Natural killer cell (primary cell): ENCODE measurements at regions of chr11 and their contacts with region 1.

Region 1: DNA sequence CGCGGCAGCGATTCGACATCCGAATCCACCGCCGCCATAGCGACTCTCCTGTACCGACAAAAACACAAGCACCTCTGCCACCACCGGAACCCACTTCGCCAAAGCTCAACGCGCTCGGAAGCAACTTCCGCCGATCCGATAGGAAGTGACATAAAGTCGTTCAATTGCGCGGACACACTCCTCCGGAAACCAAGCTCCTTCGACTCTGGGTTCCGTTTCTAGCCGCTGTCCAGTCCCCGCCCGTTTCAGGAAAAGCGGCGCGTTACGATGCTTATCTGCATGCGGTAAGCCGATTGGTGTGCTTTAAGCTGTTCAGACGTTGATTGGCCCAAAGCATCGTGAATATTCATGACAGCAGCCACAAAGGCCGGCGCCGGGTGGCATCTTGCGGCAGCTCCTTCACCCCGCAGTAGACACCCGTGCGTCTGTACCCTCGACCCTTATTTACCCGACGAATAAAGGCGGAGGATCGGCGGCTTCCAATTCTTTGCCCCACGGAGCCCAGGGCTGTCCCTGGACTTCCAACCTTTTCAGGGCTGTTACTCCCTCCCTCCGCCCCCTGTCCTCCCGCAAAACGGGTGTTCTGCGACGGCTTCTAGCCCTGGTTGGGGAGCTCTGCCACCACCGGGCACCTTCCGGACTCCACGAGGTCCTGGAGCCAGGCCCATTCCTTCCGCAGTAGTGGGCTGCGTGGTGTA is at the start of gene TUT1:
- DNase-seq: peak; percentile 91 to 99
- ATAC-seq: peak; percentile 84 to 95 (median 87)
- H3K4me3 ChIP-seq: peak within 1 kb of the TSS; percentile 58
- H3K4me3 Mint-ChIP-seq: peak within 1 kb of the TSS; percentile 98
- H3K27ac ChIP-seq: peak within 1 kb of the TSS; percentile 90
- H3K27ac Mint-ChIP-seq: peak within 1 kb of the TSS; percentile 94 to 97
- H3K4me1 ChIP-seq: peaks cover 32% of the 10 kb centered on the region
- H3K4me1 Mint-ChIP-seq: peaks cover 32 to 40% of the 10 kb centered on the region in 2 donors
- H3K27me3 ChIP-seq: no peaks in the 10 kb centered on the region
- H3K27me3 Mint-ChIP-seq: no peaks in the 10 kb centered on the region
- CTCF ChIP-seq: no peak
- total RNA-seq, gene TUT1: 20.0 to 28.9 (median 26.2) TPM

Region 2: GRCh38 chr11:62556108-62556871 is 35.3 kb before region 1 on chr11:
- intact Hi-C with region 1: loop called (anchors 2 kb)
- DNase-seq: peak; percentile 81 to 93
- ATAC-seq: peak; percentile 53 to 79 (median 69)
- H3K4me3 ChIP-seq: peak overlapping the region; percentile 12
- H3K4me3 Mint-ChIP-seq: peak overlapping the region; percentile 93
- H3K27ac ChIP-seq: peak overlapping the region; percentile 97
- H3K27ac Mint-ChIP-seq: peak overlapping the region; percentile 97 to 98
- H3K4me1 ChIP-seq: peaks cover 92% of the 10 kb centered on the region
- H3K4me1 Mint-ChIP-seq: peaks cover 85 to 96% of the 10 kb centered on the region in 2 donors
- H3K27me3 ChIP-seq: no peaks in the 10 kb centered on the region
- H3K27me3 Mint-ChIP-seq: no peaks in the 10 kb centered on the region
- CTCF ChIP-seq: no peak

Region 3: DNA sequence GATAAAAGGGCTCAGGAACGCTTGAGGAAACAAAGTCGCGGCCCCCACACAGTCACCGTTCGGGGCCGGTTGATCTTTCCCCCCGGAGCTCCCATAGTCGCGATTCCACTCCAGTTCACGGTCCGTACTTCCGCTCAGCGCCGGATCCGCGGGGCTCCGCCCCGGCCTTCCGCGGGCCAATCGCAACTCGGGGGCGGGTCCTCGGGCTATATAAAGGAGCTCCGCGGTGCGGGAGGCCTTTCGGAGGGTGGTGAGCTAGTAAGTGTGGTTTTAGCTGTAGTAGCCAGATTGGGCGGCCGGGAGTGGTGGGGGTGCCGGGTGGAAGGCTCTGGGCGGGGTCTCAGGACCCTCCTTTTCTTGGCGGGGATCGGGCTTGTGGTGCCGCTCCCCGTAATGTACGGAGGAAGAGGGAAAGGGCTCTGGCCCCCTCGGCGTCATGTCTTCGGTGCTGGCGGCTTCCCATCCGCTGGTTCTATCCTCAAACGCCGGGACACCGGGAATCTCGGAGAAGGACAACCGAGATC is 73.5 kb after region 1 on chr11 and contains the starts of genes C11orf98 and CSKMT:
- intact Hi-C with region 1: loop called (anchors 2 kb)
- DNase-seq: peak; percentile 96
- ATAC-seq: peak; percentile 92 to 97 (median 95)
- H3K4me3 ChIP-seq: peak within 1 kb of the TSS; percentile 87
- H3K4me3 Mint-ChIP-seq: peak within 1 kb of the TSS; percentile 96
- H3K27ac ChIP-seq: peak within 1 kb of the TSS; percentile 80
- H3K27ac Mint-ChIP-seq: peak within 1 kb of the TSS; percentile 87 to 95
- H3K4me1 ChIP-seq: peaks cover 28% of the 10 kb centered on the region
- H3K4me1 Mint-ChIP-seq: peaks cover 6 to 29% of the 10 kb centered on the region in 2 donors
- H3K27me3 ChIP-seq: no peaks in the 10 kb centered on the region
- H3K27me3 Mint-ChIP-seq: no peaks in the 10 kb centered on the region
- CTCF ChIP-seq: no peak
- total RNA-seq, gene C11orf98: 36.5 to 57.9 (median 39.1) TPM
- total RNA-seq, gene CSKMT: 12.0 to 21.5 (median 13.7) TPM

Region 4: GRCh38 chr11:62694455-62695167 is 103.0 kb after region 1 on chr11:
- intact Hi-C with region 1: loop called (anchors 1 kb)
- DNase-seq: peak; percentile 72 to 91
- ATAC-seq: peak; percentile 78 to 98 (median 96)
- H3K4me3 ChIP-seq: no peak overlapping the region
- H3K4me3 Mint-ChIP-seq: no peak overlapping the region
- H3K27ac ChIP-seq: no peak overlapping the region
- H3K27ac Mint-ChIP-seq: peak overlapping the region in 1 of 2 donors; percentile 7
- H3K4me1 ChIP-seq: no peaks in the 10 kb centered on the region
- H3K4me1 Mint-ChIP-seq: peaks cover 8% of the 10 kb centered on the region in 2 donors
- H3K27me3 ChIP-seq: no peaks in the 10 kb centered on the region
- H3K27me3 Mint-ChIP-seq: no peaks in the 10 kb centered on the region
- CTCF ChIP-seq: peak; percentile 84

Region 5: DNA sequence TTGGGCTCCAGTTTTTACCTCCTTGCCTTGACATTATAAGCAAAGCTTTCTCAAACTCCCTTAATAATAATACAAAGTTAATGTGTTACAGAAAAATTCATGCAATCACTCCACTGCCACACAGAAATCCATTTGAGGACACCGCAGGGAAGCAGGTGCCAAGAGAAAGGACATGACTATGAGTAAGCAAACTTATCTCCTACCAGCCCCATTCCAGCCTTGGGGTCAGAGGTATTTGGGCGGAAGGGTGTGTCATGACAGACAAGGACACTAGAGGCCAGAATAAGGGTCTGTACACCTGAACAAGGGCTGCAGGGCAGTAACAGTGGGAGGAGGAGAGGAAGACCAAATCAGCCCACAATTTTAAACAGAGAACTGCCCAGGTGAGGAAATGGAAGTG is 121.7 kb after region 1 on chr11:
- intact Hi-C with region 1: no loop called
- DNase-seq: no peak
- ATAC-seq: no peak
- H3K4me3 ChIP-seq: no peak overlapping the region
- H3K4me3 Mint-ChIP-seq: no peak overlapping the region
- H3K27ac ChIP-seq: no peak overlapping the region
- H3K27ac Mint-ChIP-seq: peak overlapping the region; percentile 66 to 72
- H3K4me1 ChIP-seq: peaks cover 19% of the 10 kb centered on the region
- H3K4me1 Mint-ChIP-seq: peaks cover 21 to 38% of the 10 kb centered on the region in 2 donors
- H3K27me3 ChIP-seq: no peaks in the 10 kb centered on the region
- H3K27me3 Mint-ChIP-seq: no peaks in the 10 kb centered on the region
- CTCF ChIP-seq: no peak

Region 6: GRCh38 chr11:62841361-62842184 is 250.0 kb after region 1 on chr11:
- intact Hi-C with region 1: loop called (anchors 2 kb)
- DNase-seq: peak; percentile 75 to 94
- ATAC-seq: peak; percentile 46 to 74 (median 65)
- H3K4me3 ChIP-seq: peak overlapping the region; percentile 82
- H3K4me3 Mint-ChIP-seq: no peak overlapping the region
- H3K27ac ChIP-seq: peak overlapping the region; percentile 92
- H3K27ac Mint-ChIP-seq: no peak overlapping the region
- H3K4me1 ChIP-seq: peaks cover 35% of the 10 kb centered on the region
- H3K4me1 Mint-ChIP-seq: peaks cover 17 to 19% of the 10 kb centered on the region in 2 donors
- H3K27me3 ChIP-seq: no peaks in the 10 kb centered on the region
- H3K27me3 Mint-ChIP-seq: no peaks in the 10 kb centered on the region
- CTCF ChIP-seq: no peak

Region 7: GRCh38 chr11:62880803-62881578 is 289.4 kb after region 1 on chr11 and contains the start of gene SLC3A2:
- intact Hi-C with region 1: loop called (anchors 5 kb)
- DNase-seq: peak; percentile 88 to 94
- ATAC-seq: peak; percentile 72 to 89 (median 80)
- H3K4me3 ChIP-seq: peak within 1 kb of the TSS; percentile 100
- H3K4me3 Mint-ChIP-seq: peak within 1 kb of the TSS; percentile 100
- H3K27ac ChIP-seq: peak within 1 kb of the TSS; percentile 90
- H3K27ac Mint-ChIP-seq: peak within 1 kb of the TSS; percentile 99
- H3K4me1 ChIP-seq: peaks cover 36% of the 10 kb centered on the region
- H3K4me1 Mint-ChIP-seq: peaks cover 41 to 56% of the 10 kb centered on the region in 2 donors
- H3K27me3 ChIP-seq: no peaks in the 10 kb centered on the region
- H3K27me3 Mint-ChIP-seq: no peaks in the 10 kb centered on the region
- CTCF ChIP-seq: peak; percentile 82
- total RNA-seq, gene SLC3A2: 200 to 235 (median 207) TPM